HEK293 (cell line): ENCODE measurements at regions of chr17 and their contacts with region 1.

Region 1: GRCh38 chr17:61862975-61863800 is at the start of gene BRIP1:
- H3K4me3 ChIP-seq: peak within 1 kb of the TSS; percentile 72
- H3K27ac ChIP-seq: peak within 1 kb of the TSS; percentile 94
- H3K4me1 ChIP-seq: peaks cover 13% of the 10 kb centered on the region
- CTCF ChIP-seq: no peak; the same call in 1 of the 2 replicates

Region 2: DNA sequence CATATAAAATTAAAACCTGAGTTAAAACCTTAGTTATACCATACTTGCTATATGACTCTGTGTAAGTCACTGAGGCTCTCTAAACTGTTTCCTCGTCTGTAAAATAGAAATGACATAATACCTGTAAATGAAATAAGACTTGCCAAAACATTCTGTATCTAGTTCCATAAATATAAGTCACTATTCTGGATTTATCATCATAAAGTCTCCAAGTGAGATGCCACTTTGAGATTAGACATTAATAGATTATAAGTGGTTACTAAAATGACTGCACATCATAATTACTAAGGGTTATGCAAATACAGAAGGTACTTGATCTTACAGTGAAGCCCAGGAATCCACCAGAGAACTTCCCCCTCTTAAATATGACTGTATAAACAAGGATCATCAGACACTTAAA is 12.1 kb after region 1 on chr17:
- CTCF ChIA-PET with region 1: interaction called, 4 read pairs
- POLR2A ChIA-PET with region 1: interaction called, 11 read pairs
- H3K4me3 ChIP-seq: no peak overlapping the region
- H3K27ac ChIP-seq: no peak overlapping the region
- H3K4me1 ChIP-seq: no peaks in the 10 kb centered on the region
- CTCF ChIP-seq: no peak

Region 3: GRCh38 chr17:61891830-61892229 is 28.6 kb after region 1 on chr17:
- CTCF ChIA-PET with region 1: no interaction called
- POLR2A ChIA-PET with region 1: interaction called, 14 read pairs
- H3K4me3 ChIP-seq: no peak overlapping the region
- H3K27ac ChIP-seq: no peak overlapping the region
- H3K4me1 ChIP-seq: no peaks in the 10 kb centered on the region
- CTCF ChIP-seq: no peak

Region 4: DNA sequence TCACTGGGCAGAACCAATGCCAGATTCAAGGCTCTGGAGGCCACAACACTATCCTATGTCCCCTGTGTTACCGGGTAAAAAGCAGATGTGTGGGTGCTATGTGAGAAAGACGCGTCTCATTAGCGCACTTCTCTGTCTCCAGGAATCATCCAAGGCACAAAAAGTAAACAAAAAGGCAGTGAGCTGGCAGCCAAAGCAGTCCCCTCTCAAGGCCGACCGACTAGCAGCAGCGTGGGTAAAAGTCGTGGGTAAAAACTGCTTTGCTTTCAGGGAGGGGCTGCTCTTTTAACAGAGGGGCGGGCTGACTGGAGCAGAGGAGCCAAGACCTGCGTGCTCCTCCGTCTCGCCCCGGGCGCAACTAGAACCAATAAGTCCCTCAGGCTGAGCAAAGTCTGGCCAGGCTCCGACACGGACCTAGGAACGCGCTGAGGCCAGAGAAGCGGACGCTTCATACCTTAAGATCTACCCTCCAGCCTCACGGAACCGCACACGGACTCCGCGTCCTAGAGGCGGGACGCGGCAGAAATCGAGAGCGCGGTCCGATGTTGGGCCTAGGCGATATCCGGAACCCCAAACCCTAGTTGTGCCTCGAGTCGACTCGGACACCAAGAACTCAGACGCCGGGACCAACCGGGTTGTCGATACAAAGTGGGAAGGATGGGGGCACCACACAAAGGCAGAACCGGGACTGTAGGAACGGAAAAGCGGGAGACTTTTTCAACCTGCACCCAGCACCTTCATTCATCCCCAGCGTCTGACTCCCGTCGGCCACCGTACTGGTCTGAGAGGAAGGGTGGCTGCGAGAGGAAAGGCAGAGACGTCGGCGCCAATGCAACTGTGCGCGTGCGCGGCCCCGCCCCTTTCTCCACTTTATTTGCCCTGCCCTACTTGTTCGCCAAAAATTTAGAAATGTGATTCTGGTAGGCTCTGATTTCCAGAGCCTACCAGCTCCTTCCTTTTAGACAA is 64.3 kb after region 1 on chr17 and contains the start of gene INTS2:
- CTCF ChIA-PET with region 1: no interaction called
- POLR2A ChIA-PET with region 1: interaction called, 17 read pairs
- H3K4me3 ChIP-seq: peak within 1 kb of the TSS; percentile 93
- H3K27ac ChIP-seq: peak within 1 kb of the TSS; percentile 79
- H3K4me1 ChIP-seq: peaks cover 6% of the 10 kb centered on the region; the same call in 1 of the 2 replicates
- CTCF ChIP-seq: peak; percentile 60

Region 5: GRCh38 chr17:62065598-62066468 is 202.6 kb after region 1 on chr17:
- CTCF ChIA-PET with region 1: interaction called, 3 read pairs
- POLR2A ChIA-PET with region 1: interaction called, 16 read pairs
- H3K4me3 ChIP-seq: peak overlapping the region; percentile 97
- H3K27ac ChIP-seq: peak overlapping the region; percentile 92
- H3K4me1 ChIP-seq: peaks cover 13% of the 10 kb centered on the region
- CTCF ChIP-seq: peak; percentile 89

Region 6: DNA sequence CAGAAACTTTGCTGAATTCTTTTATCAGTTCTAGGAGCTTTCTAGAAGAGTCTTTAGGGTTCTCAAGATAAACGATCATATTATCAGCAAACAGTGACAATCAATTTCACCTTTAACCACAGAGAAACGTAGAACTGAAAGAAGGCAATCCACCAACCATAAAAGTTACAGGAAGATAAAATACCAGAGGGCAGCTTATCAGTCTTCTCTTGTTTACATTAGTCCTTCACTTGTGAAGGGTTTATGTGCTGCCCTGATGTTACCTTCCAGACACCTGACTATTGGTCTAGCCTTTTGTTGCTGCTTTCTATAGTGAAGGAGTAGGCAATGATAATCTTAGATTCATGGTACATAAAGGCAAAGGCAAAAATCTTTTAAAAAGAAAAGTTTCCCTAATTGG is 444.0 kb after region 1 on chr17:
- CTCF ChIA-PET with region 1: no interaction called
- POLR2A ChIA-PET with region 1: no interaction called
- H3K4me3 ChIP-seq: no peak overlapping the region
- H3K27ac ChIP-seq: no peak overlapping the region
- H3K4me1 ChIP-seq: peaks cover 7% of the 10 kb centered on the region
- CTCF ChIP-seq: no peak